PC-3 (cell line): ENCODE measurements at regions of chr6 and their contacts with region 1.

Region 1: DNA sequence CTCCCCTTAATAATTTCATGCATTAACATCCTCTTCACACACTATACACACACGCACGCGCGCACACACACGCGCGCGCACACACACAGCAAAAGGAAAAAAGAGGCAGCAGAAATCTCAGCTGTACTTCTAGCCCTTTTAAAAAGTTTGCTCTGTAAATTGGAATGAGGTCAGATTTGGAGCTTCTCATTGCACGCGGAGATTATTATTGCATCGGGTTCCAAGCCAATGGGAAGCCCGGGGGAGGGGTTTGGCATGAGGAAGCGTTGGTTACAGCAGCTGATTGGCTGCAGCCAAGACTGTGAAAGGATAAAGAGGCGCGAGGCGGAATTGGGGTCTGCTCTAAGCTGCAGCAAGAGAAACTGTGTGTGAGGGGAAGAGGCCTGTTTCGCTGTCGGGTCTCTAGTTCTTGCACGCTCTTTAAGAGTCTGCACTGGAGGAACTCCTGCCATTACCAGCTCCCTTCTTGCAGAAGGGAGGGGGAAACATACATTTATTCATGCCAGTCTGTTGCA is at the start of gene SOX4:
- DNase-seq: peak; percentile 98
- ATAC-seq: peak; percentile 65
- H3K4me3 ChIP-seq: peak within 1 kb of the TSS; percentile 99
- H3K27ac ChIP-seq: peak within 1 kb of the TSS; percentile 69
- H3K4me1 ChIP-seq: peaks cover 26% of the 10 kb centered on the region
- H3K27me3 ChIP-seq: no peaks in the 10 kb centered on the region
- CTCF ChIP-seq: no peak
- total RNA-seq, gene SOX4: 46.1 and 62.8 TPM in 2 replicates

Region 2: DNA sequence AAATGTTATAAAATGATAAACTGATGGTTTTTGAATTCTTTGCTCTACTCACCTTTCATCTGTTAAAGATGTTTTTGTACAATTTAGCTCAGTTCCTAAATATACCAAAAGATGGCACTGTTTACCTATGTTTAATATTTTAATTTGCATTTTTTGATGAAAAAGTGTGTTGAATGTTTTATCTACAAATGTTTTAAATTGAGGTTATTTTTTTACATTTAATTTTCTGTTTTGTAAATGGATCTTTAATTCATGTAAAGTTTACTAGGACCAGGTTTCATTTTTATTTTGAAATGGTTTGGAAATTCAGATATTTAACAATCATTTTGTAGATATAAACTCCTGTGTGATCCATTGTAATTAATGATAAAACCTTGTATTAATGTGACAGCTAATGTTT is 1029.2 kb before region 1 on chr6:
- CTCF ChIA-PET with region 1: interaction called, 10 read pairs
- POLR2A ChIA-PET with region 1: interaction called, 6 read pairs
- intact Hi-C with region 1: loop called (anchors 1 kb)
- DNase-seq: peak; percentile 67
- ATAC-seq: no peak
- H3K4me3 ChIP-seq: no peak overlapping the region
- H3K27ac ChIP-seq: no peak overlapping the region
- H3K4me1 ChIP-seq: peaks cover 5% of the 10 kb centered on the region
- H3K27me3 ChIP-seq: no peaks in the 10 kb centered on the region
- CTCF ChIP-seq: peak; percentile 78

Region 3: GRCh38 chr6:21022343-21023107 is 570.9 kb before region 1 on chr6:
- CTCF ChIA-PET with region 1: interaction called, 4 read pairs
- POLR2A ChIA-PET with region 1: interaction called, 8 read pairs
- intact Hi-C with region 1: loop called (anchors 1 kb)
- DNase-seq: peak; percentile 97
- ATAC-seq: peak; percentile 82
- H3K4me3 ChIP-seq: peak overlapping the region; percentile 44
- H3K27ac ChIP-seq: peak overlapping the region; percentile 94
- H3K4me1 ChIP-seq: peaks cover 63% of the 10 kb centered on the region
- H3K27me3 ChIP-seq: no peaks in the 10 kb centered on the region
- CTCF ChIP-seq: no peak

Region 4: GRCh38 chr6:21522797-21523456 is 70.5 kb before region 1 on chr6:
- CTCF ChIA-PET with region 1: no interaction called
- POLR2A ChIA-PET with region 1: no interaction called
- intact Hi-C with region 1: loop called (anchors 5 kb)
- DNase-seq: peak; percentile 30
- ATAC-seq: peak; percentile 80
- H3K4me3 ChIP-seq: no peak overlapping the region
- H3K27ac ChIP-seq: no peak overlapping the region
- H3K4me1 ChIP-seq: no peaks in the 10 kb centered on the region
- H3K27me3 ChIP-seq: no peaks in the 10 kb centered on the region
- CTCF ChIP-seq: peak; percentile 53

Region 5: GRCh38 chr6:21928827-21929226 is 335.4 kb after region 1 on chr6:
- CTCF ChIA-PET with region 1: no interaction called
- POLR2A ChIA-PET with region 1: no interaction called
- intact Hi-C with region 1: loop called (anchors 5 kb)
- DNase-seq: no peak
- ATAC-seq: no peak
- H3K4me3 ChIP-seq: no peak overlapping the region
- H3K27ac ChIP-seq: no peak overlapping the region
- H3K4me1 ChIP-seq: no peaks in the 10 kb centered on the region
- H3K27me3 ChIP-seq: no peaks in the 10 kb centered on the region
- CTCF ChIP-seq: no peak

Region 6: GRCh38 chr6:22248513-22249308 is 655.2 kb after region 1 on chr6:
- CTCF ChIA-PET with region 1: no interaction called
- POLR2A ChIA-PET with region 1: interaction called, 3 read pairs
- intact Hi-C with region 1: loop called (anchors 5 kb)
- DNase-seq: peak; percentile 93
- ATAC-seq: peak; percentile 79
- H3K4me3 ChIP-seq: peak overlapping the region; percentile 30
- H3K27ac ChIP-seq: peak overlapping the region; percentile 95
- H3K4me1 ChIP-seq: peaks cover 45% of the 10 kb centered on the region
- H3K27me3 ChIP-seq: no peaks in the 10 kb centered on the region
- CTCF ChIP-seq: no peak

Region 7: DNA sequence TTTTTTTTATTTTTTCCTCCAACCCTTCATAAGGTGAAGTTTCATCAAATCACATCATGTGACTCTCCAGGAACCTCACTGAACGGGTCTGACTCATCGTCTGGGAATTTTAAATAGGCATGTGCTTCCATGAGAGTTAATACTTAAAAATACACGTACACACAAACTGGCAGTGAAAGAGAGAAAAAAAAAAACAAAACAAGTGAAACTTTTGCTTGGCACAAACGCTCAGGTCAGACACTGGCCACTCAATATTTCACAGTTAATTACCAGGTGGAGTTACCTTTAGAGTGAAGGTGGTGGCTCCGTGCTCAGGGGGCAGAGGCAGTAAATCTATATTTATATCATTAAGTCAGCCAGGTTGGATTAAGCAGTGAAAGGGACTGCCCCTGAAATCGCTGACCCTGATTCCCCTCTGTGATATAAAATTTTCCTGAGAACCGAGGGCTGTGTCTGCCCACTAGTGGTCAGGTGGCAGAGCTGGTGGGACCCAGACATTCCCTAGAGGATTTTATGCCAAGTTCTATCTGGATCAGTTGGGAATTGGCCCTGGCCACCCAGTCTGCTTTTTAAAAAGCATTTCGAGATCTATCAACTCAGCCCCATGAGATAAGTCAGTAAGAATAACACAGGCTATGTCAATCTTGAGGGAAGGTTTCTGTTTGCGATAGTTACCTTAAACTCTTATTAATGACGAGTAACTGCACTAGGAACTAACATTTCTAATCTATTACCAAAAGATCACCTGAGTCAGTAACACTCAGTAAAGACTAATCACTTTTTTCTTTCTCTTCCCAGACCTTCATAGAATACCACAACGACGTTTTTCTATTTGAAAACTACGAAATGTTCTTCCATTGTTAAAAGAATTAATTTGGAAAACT is 1235.0 kb after region 1 on chr6:
- CTCF ChIA-PET with region 1: no interaction called
- POLR2A ChIA-PET with region 1: interaction called, 3 read pairs
- intact Hi-C with region 1: loop called (anchors 5 kb)
- DNase-seq: peak; percentile 97
- ATAC-seq: peak; percentile 55
- H3K4me3 ChIP-seq: peak overlapping the region; percentile 42
- H3K27ac ChIP-seq: peak overlapping the region; percentile 77
- H3K4me1 ChIP-seq: peaks cover 42% of the 10 kb centered on the region
- H3K27me3 ChIP-seq: no peaks in the 10 kb centered on the region
- CTCF ChIP-seq: peak; percentile 94